Cardiac septum (tissue), 1 donor: ENCODE measurements at regions of chr7 and their contacts with region 1.

Region 1: GRCh38 chr7:39948956-39949928 is 814 bp upstream of the CDK13 start:
- DNase-seq: peak; percentile 99

Region 2: DNA sequence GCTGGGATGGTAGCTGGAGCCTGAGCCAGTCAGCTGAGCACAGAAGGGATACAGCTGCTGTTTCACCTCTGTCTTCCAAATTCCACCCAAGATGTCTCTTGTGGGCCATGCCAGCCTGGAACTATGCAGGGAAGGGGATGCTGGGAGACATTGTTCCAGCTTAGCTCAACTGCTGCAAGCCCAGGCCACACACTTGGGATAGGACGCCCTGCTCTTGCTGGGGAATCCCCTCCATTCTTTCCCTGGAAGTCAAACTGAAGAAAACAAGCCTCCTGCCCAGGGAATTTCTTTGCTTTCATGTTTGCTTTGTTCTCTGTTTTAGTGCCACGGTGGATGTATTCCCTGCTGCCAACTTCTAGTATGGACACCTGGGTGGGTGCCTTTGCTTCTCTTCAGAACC is 54.3 kb before region 1 on chr7:
- intact Hi-C with region 1: loop called (anchors 5 kb)
- DNase-seq: no peak

Region 3: DNA sequence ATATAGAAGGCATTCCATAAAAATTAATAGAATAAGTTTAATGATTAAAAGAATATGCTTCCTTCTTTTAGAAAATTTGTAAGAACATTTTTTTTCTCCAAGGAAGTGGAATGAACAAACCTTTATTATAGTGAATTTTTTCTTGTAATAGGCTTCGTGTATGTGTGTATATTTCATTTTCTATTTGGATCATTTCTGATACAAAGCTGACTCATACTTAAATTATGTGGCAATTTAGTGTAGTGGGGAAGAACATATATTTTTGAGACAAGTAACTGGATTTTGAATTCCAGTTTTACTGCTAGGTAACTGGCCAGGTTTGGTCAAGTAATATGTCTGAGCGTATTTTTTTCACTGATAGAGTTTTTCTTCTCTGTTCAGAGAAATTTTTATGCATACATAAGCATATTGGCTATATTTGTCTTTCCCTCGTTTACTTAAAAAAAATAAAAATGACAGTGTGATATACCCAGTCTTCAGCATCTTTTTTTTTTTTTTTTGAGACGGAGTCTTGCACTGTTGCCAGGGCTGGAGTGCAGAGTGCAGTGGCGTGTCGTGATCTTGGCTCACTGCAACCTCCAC is 51.6 kb after region 1 on chr7:
- intact Hi-C with region 1: no loop called
- DNase-seq: no peak

Region 4: GRCh38 chr7:40057292-40057691 is 108.0 kb after region 1 on chr7:
- intact Hi-C with region 1: loop called (anchors 2 kb)
- DNase-seq: no peak

Region 5: DNA sequence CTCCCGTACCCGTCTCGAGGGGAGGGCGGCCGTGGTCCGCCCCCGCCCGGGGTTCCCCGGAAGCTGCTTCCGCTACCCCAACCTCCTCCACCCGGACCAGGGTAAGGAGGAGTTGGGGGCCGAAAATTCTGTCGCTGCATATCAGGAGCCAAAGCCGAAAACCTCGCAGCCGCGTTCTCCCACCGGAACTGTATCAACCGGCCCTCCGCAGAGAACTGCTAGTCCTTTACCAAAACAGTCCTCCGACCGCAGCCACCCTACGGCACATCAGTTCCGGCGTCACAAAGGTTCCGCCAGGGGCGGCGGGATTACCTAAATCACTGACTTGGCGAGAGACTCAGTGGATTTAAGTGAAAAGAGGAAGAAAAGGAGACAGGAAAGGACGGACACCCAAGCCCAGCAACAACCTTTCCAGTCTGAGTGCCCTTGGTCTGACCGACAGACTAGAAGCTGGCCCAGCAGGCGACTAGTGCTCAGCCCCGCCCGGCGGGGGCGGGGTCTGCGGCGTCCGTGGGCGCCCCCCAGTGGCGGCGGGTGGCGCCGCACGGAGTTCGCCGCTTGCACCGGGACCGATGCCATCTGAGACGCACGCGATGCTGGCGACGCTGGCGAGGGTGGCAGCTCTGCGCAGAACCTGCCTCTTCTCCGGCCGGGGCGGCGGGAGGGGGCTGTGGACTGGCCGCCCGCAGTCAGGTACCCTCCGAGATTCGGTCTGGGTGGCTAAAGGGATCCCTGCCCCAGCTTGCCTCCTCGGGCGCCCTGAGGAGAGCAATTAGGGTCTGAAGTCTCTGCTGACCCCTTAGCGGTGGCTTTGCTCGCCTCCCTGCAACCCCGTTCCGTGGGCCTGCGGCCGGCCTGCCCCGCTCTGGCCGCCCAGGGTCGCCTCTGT is 185.4 kb after region 1 on chr7 and contains the starts of genes MPLKIP and SUGCT:
- intact Hi-C with region 1: loop called (anchors 1 kb)
- DNase-seq: peak; percentile 94
- total RNA-seq, gene MPLKIP: 17.1 TPM
- total RNA-seq, gene SUGCT: 3.1 TPM